Transverse colon (tissue), 4 donors: ENCODE measurements at regions of chr2 and their contacts with region 1.

Region 1: GRCh38 chr2:104889960-104890684 is 36.2 kb downstream of the POU3F3 start:
- DNase-seq: peak; percentile 64
- H3K4me3 ChIP-seq: peak overlapping the region in 1 of 4 donors; percentile 16
- H3K27ac ChIP-seq: peak overlapping the region; percentile 74 to 78 (median 78)
- H3K4me1 ChIP-seq: peaks cover 0 to 23% (median 14%) of the 10 kb centered on the region in 4 donors
- H3K27me3 ChIP-seq: peaks cover 5% of the 10 kb centered on the region
- CTCF ChIP-seq: no peak
- EP300 ChIP-seq: no peak
- POLR2A ChIP-seq: no peak

Region 2: GRCh38 chr2:103138123-103138901 is 1751.8 kb before region 1 on chr2:
- in situ Hi-C with region 1: no loop called
- intact Hi-C with region 1: loop called (anchors 5 kb)
- DNase-seq: no peak
- H3K4me3 ChIP-seq: no peak overlapping the region
- H3K27ac ChIP-seq: no peak overlapping the region
- H3K4me1 ChIP-seq: no peaks in the 10 kb centered on the region
- H3K27me3 ChIP-seq: no peaks in the 10 kb centered on the region
- CTCF ChIP-seq: no peak
- EP300 ChIP-seq: no peak
- POLR2A ChIP-seq: no peak